ENCODE measurements at regions of chr12 and their contacts with region 1.

Region 1: DNA sequence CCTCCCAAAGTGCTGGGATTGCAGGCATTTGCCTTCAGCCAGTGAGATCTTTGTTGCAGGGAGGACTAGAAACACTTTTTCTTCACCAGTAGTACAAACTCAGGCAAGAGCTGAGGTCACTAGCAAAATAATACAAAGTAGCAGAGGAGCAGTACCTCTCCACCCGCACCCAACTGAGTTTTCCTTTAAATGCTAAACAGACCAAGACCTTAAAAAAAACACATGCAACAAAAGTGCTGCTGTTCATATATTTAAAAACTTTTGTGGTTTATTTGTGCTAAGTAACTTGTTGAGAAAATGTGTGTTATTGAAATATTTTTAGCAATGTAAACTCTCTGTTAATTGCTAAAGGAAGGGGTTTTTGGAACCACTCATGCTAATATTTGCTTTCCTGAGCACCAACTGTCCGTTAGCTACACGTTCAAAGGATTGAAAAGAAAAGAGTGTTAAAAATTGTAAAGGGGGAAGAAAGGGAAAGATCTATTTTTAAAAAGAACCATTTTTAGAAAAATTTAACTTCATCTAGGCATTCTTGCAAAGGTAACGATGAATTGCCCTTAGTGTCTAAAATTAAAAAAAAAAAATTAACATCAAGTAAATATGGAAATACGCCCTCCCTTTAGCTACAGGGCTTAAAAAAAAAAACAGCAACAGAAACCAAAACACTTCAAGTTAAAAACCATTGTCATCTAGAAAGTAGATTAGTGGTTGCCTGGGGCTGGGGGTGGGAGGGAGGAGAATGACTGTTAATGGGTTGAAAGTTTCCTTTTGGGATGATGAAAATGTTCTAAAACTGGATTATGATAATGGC is 114.0 kb upstream of the KRAS start:
- DNase-seq: peak; percentile 59
- ATAC-seq: peak; percentile 79
- H3K4me3 Mint-ChIP-seq: peak overlapping the region; percentile 48
- H3K27ac Mint-ChIP-seq: peak overlapping the region; percentile 74
- H3K4me1 Mint-ChIP-seq: peaks cover 15% of the 10 kb centered on the region
- H3K27me3 Mint-ChIP-seq: no peaks in the 10 kb centered on the region

Region 2: GRCh38 chr12:25146686-25147085 is 218.0 kb before region 1 on chr12:
- CTCF ChIA-PET with region 1: no interaction called
- POLR2A ChIA-PET with region 1: no interaction called
- DNase-seq: no peak
- ATAC-seq: no peak
- H3K4me3 Mint-ChIP-seq: no peak overlapping the region
- H3K27ac Mint-ChIP-seq: no peak overlapping the region
- H3K4me1 Mint-ChIP-seq: no peaks in the 10 kb centered on the region
- H3K27me3 Mint-ChIP-seq: peaks cover 2% of the 10 kb centered on the region

Region 3: DNA sequence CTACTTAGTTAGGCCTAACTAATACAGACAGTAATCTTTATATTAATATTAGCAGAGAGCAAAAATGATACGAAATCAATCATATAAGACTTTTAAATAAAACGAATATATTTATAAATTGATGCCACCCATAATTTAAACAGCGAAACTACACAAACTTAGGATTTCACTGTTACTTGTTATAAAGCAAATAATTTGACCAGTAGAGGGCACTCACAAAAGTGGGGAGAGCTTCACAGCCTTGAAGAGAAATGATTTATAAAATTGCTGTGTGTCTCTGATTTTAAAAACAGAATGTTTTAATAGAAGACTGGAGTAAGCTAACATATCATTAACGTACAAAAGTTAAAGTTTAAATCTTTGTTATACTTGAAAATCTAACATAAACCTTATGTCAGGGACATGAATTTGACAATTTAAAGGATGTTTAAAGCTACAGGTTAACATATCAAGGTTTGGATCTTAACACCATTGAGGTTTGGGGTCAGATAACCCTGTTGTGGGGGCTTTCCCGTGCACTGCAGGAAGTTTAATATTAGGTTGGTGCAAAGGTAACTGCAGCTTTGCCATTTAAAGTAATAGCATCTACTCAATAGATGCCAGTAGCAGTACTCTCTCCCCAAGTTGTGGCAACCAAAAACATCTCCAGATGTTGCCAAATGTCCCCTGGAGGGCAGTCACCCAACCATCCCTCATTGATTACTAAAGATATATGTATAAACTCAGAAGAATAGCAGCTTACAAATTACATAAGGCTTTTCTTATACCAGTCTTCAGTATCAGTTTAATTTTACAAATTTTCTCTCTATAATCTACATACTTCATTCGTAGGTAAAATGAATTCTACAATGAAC is 123.3 kb before region 1 on chr12:
- CTCF ChIA-PET with region 1: interaction called, 14 read pairs
- POLR2A ChIA-PET with region 1: interaction called, 3 read pairs
- DNase-seq: peak; percentile 63
- ATAC-seq: peak; percentile 90
- H3K4me3 Mint-ChIP-seq: no peak overlapping the region
- H3K27ac Mint-ChIP-seq: no peak overlapping the region
- H3K4me1 Mint-ChIP-seq: peaks cover 22% of the 10 kb centered on the region
- H3K27me3 Mint-ChIP-seq: no peaks in the 10 kb centered on the region

Region 4: DNA sequence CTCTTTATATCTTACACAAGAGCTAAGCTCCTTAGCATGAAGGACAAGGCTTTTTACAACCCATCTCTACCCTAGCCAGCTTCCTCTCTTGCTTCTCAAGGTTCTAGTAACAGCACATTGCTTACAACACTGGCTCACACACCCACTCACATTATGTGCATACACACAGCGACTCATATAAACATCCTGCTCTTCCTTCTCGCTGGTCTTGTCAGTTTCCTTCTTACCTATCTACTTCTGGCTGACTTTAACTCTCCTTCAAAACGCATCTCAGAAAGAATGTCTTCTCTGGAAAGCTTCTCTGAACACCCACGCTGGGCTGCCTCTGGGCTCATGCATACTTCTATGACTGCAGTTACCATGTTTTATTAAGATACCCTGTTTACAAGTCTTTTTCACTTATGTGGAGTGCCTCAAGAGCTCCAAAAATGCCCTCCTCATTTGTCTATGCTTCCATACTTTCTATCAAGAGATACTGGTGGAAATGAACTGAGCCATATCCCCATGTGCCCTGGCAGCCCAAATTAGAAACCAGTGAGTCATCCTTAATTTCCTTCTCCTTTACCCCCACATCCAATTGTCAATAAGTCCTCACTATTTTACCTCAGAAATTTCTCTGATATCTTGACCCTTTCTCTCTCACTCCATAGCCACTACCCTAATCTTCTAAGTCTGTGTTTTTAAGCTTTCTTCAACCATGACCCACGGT is 12.9 kb after region 1 on chr12:
- CTCF ChIA-PET with region 1: interaction called, 15 read pairs
- POLR2A ChIA-PET with region 1: interaction called, 10 read pairs
- DNase-seq: peak; percentile 56
- ATAC-seq: peak; percentile 76
- H3K4me3 Mint-ChIP-seq: no peak overlapping the region
- H3K27ac Mint-ChIP-seq: peak overlapping the region; percentile 60
- H3K4me1 Mint-ChIP-seq: peaks cover 53% of the 10 kb centered on the region
- H3K27me3 Mint-ChIP-seq: no peaks in the 10 kb centered on the region

Measured in activated CD8-positive, alpha-beta T cell treated with anti-CD3 and anti-CD28 coated beads, Interleukin-2, amount 10 ng/mL, durations not matched to agents 7 days and 5 days (primary cell).